OCI-LY7 (cell line): ENCODE measurements at regions of chr12 and their contacts with region 1.

Region 1: GRCh38 chr12:111086947-111087700 is 166.7 kb upstream of the MYL2 start:
- DNase-seq: no peak
- H3K4me3 ChIP-seq: no peak overlapping the region
- H3K27ac ChIP-seq: peak overlapping the region; percentile 78
- H3K4me1 ChIP-seq: peaks cover 95% of the 10 kb centered on the region
- CTCF ChIP-seq: no peak

Region 2: DNA sequence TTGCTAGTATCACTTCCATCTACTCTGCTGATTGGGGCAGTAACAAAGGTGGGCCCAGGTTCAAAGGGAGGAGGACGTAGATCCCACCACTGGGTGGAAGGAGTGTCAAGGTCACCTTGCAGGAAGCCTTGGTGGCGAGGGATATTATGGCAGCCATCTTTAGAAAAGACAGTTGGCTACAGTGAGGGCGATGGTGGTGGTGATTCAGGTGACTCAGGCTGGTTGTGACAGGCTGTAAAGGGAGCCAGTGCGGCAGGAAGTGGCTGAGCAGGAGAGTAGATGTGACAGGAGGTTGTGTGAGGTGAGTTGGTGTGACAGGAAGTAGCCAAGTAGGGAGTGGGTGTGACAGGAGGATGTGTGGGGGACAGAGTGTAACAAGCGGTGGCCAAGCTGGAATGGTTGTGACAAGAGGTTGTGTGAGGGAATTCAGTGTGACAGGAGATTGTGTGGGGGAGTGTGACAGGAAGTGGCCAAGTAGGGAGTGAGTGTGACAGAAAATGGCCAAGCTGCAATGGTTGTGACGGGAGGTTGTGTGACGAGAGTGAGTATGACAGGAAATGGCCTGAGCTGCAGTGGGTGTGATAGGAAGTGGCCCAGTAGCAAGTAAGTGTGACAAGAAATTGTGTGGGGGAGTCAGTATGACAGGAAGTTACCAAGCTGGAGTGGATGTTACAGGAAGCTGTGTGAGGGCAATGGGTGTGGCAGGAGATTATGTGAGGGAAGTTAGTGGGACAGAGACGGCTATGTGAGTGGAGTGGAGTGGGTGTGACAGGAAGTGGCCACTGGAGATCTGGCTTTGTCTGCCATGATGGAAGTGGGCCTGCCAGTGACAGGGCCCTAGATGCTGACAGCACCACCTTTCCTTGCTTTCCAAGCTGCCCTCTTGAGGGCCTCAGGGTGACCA is 30.3 kb before region 1 on chr12:
- CTCF ChIA-PET with region 1: no interaction called
- POLR2A ChIA-PET with region 1: no interaction called
- intact Hi-C with region 1: loop called (anchors 2 kb)
- DNase-seq: peak; percentile 83
- H3K4me3 ChIP-seq: peak overlapping the region; percentile 18
- H3K27ac ChIP-seq: peak overlapping the region; percentile 81
- H3K4me1 ChIP-seq: peaks cover 27% of the 10 kb centered on the region
- CTCF ChIP-seq: no peak

Region 3: GRCh38 chr12:111102062-111102739 is 15.1 kb after region 1 on chr12:
- CTCF ChIA-PET with region 1: interaction called, 8 read pairs
- POLR2A ChIA-PET with region 1: interaction called, 32 read pairs
- intact Hi-C with region 1: no loop called
- DNase-seq: peak; percentile 62
- H3K4me3 ChIP-seq: peak overlapping the region; percentile 71
- H3K27ac ChIP-seq: peak overlapping the region; percentile 68
- H3K4me1 ChIP-seq: peaks cover 50% of the 10 kb centered on the region
- CTCF ChIP-seq: no peak